ENCODE measurements at regions of chr19 and their contacts with region 1.

Region 1: DNA sequence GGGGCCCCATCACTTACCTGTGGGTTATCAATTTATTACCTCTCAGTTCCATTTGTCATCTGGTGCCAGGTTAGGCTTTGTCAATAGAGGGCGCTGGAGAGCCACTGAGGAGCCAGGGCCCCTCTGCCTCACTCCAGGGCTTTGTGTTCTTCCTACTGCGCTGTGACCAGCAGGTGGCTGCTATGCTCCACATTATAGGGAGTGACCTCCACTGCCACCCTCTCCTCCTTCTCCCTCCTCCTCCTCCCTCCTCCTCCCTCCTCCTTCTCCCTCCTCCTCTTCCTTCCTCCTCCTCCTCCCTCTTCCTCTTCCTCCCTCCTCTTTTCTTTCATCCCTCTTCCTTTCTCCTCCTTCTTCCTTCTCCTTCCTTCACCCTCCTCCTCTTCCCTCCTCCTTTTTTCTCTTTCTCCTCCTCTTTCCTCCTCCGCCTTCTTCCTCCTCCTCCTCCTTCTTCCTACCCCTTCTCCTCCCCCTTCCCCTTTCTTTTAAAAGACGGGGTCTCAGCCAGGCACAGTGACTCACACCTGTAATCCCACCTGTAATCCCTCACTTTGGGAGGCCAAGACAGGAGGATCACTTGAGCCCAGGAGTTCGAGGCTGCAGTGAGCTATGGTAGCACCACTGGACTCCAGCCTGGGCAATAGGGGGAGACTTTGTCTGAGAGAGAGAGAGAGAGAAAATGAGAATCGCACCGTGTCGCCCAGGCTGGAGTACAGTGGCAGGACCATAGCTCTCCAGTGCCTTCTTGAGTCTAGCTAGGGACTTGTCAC is 10.3 kb upstream of the ZBTB32 start:
- DNase-seq: peak; percentile 95
- H3K4me3 ChIP-seq: no peak overlapping the region
- H3K27ac ChIP-seq: no peak overlapping the region
- H3K4me1 ChIP-seq: no peaks in the 10 kb centered on the region
- H3K27me3 ChIP-seq: peaks cover 0 to 3% (median 0%) of the 10 kb centered on the region in 4 donors
- CTCF ChIP-seq: peak; percentile 94 to 99 (median 99)
- EP300 ChIP-seq: no peak
- POLR2A ChIP-seq: no peak

Region 2: GRCh38 chr19:35822579-35822978 is 128.6 kb after region 1 on chr19:
- intact Hi-C with region 1: loop called (anchors 5 kb)
- DNase-seq: no peak
- H3K4me3 ChIP-seq: no peak overlapping the region
- H3K27ac ChIP-seq: no peak overlapping the region
- H3K4me1 ChIP-seq: no peaks in the 10 kb centered on the region
- H3K27me3 ChIP-seq: peaks cover 0 to 68% (median 3%) of the 10 kb centered on the region in 4 donors
- CTCF ChIP-seq: no peak
- EP300 ChIP-seq: no peak
- POLR2A ChIP-seq: no peak